ENCODE measurements at regions of chr19 and their contacts with region 1.

Region 1: DNA sequence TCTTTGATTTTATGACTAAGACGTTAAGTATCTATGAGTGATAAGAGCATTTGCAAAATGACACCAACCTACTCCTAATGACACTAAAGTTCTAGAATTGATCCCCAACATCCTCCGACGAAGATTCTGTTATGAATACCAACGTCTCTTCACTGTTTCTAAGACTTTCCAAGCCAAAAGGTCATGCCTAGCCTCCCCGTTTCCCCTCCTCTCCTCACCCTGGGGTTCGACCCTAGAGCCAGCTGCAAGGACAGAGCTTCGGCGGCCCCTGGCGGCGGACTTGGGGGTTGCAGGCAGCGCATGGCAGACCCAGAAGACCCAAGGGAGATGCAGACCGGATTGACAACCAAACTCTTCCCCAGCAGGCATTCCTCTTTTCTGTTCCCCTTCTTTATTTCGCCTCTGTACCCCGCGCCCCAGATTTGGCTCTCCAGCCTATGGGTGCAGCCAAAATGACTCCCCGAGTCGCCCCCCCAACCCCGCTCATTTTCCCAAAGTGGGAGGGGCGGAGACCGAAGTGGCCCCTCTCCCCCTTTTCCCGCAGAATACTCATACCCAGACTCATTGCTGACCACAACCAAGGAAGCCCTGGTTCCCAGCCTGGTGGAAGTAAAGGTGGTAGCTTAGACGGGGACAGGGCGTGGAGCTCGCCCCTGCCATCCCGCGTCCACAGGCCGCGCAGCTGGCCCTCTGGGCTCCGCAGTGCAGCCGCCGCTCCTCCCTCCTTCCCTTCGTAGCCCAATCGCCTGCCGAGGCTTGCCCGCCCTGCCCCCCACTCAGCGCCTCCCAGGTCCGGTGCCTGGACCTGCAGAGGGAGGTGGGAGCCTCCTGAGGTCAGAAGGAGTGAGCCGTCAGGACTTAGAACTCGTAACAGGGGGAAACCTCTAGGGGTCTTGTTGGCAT is 4.1 kb upstream of the EML2 start:
- DNase-seq: peak; percentile 49
- H3K4me3 ChIP-seq: peak overlapping the region; percentile 37
- H3K27ac ChIP-seq: no peak overlapping the region
- H3K27me3 ChIP-seq: no peaks in the 10 kb centered on the region
- CTCF ChIP-seq: peak; percentile 99

Region 2: GRCh38 chr19:45584332-45585157 is 58.7 kb before region 1 on chr19 and contains the start of gene OPA3:
- CTCF ChIA-PET with region 1: interaction called, 3 read pairs
- POLR2A ChIA-PET with region 1: interaction called, 11 read pairs
- DNase-seq: peak; percentile 100
- H3K4me3 ChIP-seq: peak within 1 kb of the TSS; percentile 92
- H3K27ac ChIP-seq: peak within 1 kb of the TSS; percentile 97
- H3K27me3 ChIP-seq: no peaks in the 10 kb centered on the region
- CTCF ChIP-seq: no peak
- polyA plus RNA-seq, gene OPA3: 12.2 and 13.3 TPM in 2 replicates

Region 3: GRCh38 chr19:45607071-45608029 is 35.9 kb before region 1 on chr19:
- CTCF ChIA-PET with region 1: interaction called, 16 read pairs
- POLR2A ChIA-PET with region 1: interaction called, 3 read pairs
- DNase-seq: peak; percentile 30
- H3K4me3 ChIP-seq: peak overlapping the region; percentile 41
- H3K27ac ChIP-seq: no peak overlapping the region
- H3K27me3 ChIP-seq: peaks cover 4% of the 10 kb centered on the region
- CTCF ChIP-seq: peak; percentile 94

Region 4: DNA sequence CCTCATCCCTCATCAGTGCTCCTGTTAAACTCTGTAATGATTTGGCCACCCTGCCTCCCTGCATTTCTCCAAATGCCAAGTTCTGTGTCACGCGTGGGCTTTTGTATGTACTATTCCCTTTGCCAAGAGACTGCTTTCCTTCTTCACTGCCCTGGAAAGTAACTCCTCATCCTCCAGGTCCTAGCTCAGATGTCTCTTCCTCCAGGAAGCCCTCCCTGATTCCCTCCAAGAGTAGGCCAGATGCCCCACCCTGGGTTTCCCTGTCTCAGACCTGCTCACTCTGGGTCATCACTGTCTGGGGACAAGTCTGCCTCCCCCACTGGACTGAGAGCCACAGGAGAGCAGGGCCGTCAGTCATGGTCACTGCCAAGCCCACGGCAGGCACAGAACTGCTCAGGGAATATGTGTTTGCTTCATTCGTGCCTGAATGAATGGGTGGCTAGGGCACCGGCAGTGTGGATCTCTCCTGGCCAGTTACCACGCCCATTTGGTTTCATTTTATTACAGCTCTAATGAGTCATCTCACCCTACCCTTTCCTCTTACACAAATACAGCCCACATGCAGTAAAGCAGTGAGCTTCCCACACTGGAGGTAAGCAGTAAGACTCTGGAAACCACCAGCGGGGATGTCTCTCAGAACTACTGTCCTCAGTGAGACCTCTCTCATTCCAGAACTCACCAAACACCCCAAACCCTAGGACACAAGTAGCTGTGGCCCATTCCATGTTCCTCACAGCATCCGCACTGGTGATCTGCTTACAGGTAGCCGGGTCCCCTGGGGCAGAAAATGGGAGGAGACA is 29.1 kb before region 1 on chr19:
- CTCF ChIA-PET with region 1: interaction called, 11 read pairs
- POLR2A ChIA-PET with region 1: interaction called, 4 read pairs
- DNase-seq: peak; percentile 55
- H3K4me3 ChIP-seq: no peak overlapping the region
- H3K27ac ChIP-seq: peak overlapping the region; percentile 88
- H3K27me3 ChIP-seq: no peaks in the 10 kb centered on the region
- CTCF ChIP-seq: no peak

Region 5: GRCh38 chr19:46875234-46875633 is 1232.0 kb after region 1 on chr19:
- CTCF ChIA-PET with region 1: no interaction called
- POLR2A ChIA-PET with region 1: no interaction called
- DNase-seq: no peak
- H3K4me3 ChIP-seq: no peak overlapping the region
- H3K27ac ChIP-seq: no peak overlapping the region
- H3K27me3 ChIP-seq: no peaks in the 10 kb centered on the region
- CTCF ChIP-seq: no peak

Measured in AG04450 (cell line).